Heart right ventricle (tissue), 16 donors: ENCODE measurements at regions of chr2 and their contacts with region 1.

Region 1: DNA sequence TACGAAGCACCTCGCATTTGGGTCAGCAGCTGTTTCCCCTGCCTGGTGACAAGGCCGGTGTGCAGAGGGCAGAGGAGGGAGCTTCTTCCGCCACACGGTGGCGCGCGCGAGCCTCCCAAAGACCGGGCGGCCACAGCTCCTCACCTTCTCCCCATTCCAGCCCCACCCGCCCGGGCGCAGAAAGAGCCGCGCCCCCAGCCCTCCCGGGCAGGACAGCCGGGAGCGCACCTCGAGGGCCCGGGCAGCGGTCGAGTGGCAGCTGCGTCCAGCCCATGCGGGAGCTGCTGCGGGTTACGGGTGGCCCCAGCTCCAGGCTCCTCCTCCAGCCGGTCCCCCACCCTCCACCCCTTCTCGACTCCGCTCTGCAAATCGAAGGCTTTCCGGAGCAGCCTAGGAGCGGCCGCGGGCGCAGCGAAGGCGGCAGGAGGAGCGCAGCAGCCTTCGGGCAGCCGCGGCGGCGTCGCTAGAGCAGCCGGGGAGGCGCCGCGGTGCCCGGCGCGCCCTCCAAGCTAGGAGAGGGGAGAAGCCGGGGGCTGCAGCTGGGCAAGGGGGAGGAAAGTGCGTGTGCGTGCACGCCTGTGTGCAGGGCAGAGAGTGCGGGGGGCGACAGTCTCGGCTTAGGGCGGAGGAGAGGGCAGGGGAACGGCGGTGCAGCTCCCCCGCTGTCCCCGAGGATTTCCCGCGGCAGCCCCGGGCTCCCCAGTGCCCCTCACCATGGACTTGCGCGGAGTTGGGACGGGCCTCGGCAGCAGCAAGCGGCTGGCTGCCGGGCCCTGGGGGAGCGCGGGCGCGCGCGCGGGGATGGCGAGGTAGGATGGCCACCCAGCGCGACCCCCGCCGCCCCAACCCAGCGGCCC is at the start of gene CCDC85A:
- DNase-seq: peak; percentile 85 to 88
- ATAC-seq: peak; percentile 91 to 97 (median 94)
- H3K4me3 ChIP-seq: peak within 1 kb of the TSS; percentile 53 to 82 (median 65)
- H3K27ac ChIP-seq: peak within 1 kb of the TSS; percentile 56 to 92 (median 82)
- H3K4me1 ChIP-seq: peaks cover 0 to 52% (median 15%) of the 10 kb centered on the region in 9 donors
- H3K27me3 ChIP-seq: peaks cover 0 to 66% (median 12%) of the 10 kb centered on the region in 7 donors
- CTCF ChIP-seq: peak; percentile 92 to 98 (median 96)
- total RNA-seq, gene CCDC85A: 2.8 to 8.5 (median 3.6) TPM

Region 2: DNA sequence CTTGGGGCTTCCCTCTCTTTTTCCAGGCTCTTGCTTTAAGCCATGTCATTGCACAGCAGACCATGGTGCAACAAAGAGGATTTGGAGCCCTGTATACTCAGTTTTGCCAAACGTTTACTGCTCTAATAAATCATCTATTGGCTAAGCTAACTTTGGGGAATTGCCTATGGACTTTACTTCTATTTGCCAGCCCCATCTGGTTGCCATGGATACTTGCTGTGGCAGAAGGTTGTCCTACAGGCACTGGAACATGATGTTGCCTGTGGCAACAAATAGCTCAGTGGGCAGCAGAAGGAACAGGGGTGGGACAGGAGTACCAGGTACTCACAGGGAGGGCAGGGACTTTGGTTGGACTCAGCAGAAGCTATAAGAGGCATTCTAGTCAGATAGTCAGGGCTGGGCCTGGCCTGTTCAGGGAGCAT is 129.6 kb after region 1 on chr2:
- intact Hi-C with region 1: loop called in 1 of 10 experiments (anchors 10 kb)
- DNase-seq: no peak
- ATAC-seq: no peak
- H3K4me3 ChIP-seq: no peak overlapping the region
- H3K27ac ChIP-seq: peak overlapping the region in 9 of 10 donors; percentile 26 to 82 (median 46)
- H3K4me1 ChIP-seq: peaks cover 0 to 51% (median 12%) of the 10 kb centered on the region in 9 donors
- H3K27me3 ChIP-seq: no peaks in the 10 kb centered on the region
- CTCF ChIP-seq: no peak

Region 3: GRCh38 chr2:56749152-56749752 is 565.4 kb after region 1 on chr2:
- intact Hi-C with region 1: loop called in 8 of 10 experiments (anchors 1 to 10 kb)
- DNase-seq: no peak
- ATAC-seq: no peak
- H3K4me3 ChIP-seq: no peak overlapping the region
- H3K27ac ChIP-seq: no peak overlapping the region
- H3K4me1 ChIP-seq: no peaks in the 10 kb centered on the region
- H3K27me3 ChIP-seq: no peaks in the 10 kb centered on the region
- CTCF ChIP-seq: peak; percentile 43 to 76 (median 60)

Region 4: GRCh38 chr2:57509189-57509588 is 1325.3 kb after region 1 on chr2:
- intact Hi-C with region 1: loop called in 1 of 10 experiments (anchors 5 kb)
- DNase-seq: no peak
- ATAC-seq: no peak
- H3K4me3 ChIP-seq: no peak overlapping the region
- H3K27ac ChIP-seq: no peak overlapping the region
- H3K4me1 ChIP-seq: no peaks in the 10 kb centered on the region
- H3K27me3 ChIP-seq: no peaks in the 10 kb centered on the region
- CTCF ChIP-seq: no peak

Region 5: GRCh38 chr2:57523304-57523703 is 1339.4 kb after region 1 on chr2:
- intact Hi-C with region 1: loop called in 4 of 10 experiments (anchors 5 kb)
- DNase-seq: no peak
- ATAC-seq: no peak
- H3K4me3 ChIP-seq: no peak overlapping the region
- H3K27ac ChIP-seq: no peak overlapping the region
- H3K4me1 ChIP-seq: no peaks in the 10 kb centered on the region
- H3K27me3 ChIP-seq: no peaks in the 10 kb centered on the region
- CTCF ChIP-seq: no peak